ENCODE measurements at regions of chr2 and their contacts with region 1.

Region 1: DNA sequence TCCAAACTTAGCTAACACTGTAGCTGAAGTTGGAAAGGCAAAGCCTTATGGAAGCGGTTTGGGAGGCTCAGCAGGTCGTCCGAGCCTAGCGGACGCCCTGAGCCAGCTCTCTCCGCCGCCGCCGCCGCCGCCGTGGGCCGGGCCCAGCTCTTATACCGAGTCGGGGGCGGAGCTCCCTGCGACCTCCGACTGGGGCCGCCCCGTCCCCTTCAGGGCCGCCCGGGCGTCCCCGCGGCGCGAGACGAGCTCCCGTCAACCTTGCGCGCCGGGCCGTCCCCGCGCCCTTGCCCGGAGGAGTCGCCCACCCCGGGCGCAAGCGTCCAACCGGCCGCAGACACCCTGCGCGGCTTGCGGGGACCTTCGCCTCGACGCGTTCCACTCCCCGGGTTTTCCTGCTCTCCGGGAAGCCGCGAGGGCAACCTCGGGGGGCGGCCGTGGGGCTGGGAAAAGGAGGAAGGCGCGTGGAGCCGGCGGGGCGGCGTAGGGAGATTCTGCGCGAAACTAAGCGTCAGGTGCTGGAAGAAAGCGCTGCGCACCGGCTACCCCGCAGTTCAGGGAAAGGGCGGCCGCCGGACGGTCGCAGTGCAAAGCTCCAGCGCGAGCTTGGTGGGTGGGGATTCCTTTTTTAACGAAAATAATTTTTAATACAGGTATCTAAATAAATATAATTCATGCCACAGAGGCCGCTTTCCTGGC is at the start of gene SLC40A1:
- DNase-seq: peak; percentile 61
- ATAC-seq: peak; percentile 94
- H3K4me3 ChIP-seq: peak within 1 kb of the TSS; percentile 71
- H3K27ac ChIP-seq: no peak within 1 kb of the TSS
- H3K4me1 ChIP-seq: 0 out of 2 replicates have a peak, but pooled peaks cover 9% of the 10 kb centered on the region
- H3K27me3 ChIP-seq: no peaks in the 10 kb centered on the region; the same call in 1 of the 2 replicates
- CTCF ChIP-seq: no peak
- total RNA-seq, gene SLC40A1: 1.7 and 13.4 TPM in 2 replicates

Region 2: DNA sequence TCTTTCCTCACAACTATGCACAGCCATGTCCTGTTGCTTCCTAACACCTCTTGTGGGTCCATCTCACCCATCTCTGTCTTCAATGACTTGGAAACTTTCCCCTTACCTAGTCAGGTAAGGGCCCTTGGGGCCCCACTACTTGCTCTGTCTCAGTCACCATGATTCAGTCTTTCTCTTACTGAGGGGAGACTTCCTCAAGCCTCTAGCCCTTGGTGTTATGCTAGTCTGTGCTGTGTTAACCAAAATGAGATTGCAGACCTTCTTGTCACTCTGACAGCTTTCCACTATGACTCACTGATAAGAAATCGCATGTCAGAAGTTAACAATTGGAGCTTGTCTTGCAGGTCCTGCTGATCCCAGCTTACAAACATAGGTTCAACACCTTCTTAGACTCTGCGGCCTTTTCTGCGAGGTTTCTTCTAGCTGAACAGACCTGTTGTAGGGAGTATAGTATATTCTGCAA is 74.3 kb before region 1 on chr2:
- CTCF ChIA-PET with region 1: no interaction called
- POLR2A ChIA-PET with region 1: no interaction called
- intact Hi-C with region 1: no loop called
- DNase-seq: peak; percentile 5
- ATAC-seq: no peak
- H3K4me3 ChIP-seq: no peak overlapping the region
- H3K27ac ChIP-seq: no peak overlapping the region
- H3K4me1 ChIP-seq: no peaks in the 10 kb centered on the region
- H3K27me3 ChIP-seq: no peaks in the 10 kb centered on the region
- CTCF ChIP-seq: no peak

Region 3: DNA sequence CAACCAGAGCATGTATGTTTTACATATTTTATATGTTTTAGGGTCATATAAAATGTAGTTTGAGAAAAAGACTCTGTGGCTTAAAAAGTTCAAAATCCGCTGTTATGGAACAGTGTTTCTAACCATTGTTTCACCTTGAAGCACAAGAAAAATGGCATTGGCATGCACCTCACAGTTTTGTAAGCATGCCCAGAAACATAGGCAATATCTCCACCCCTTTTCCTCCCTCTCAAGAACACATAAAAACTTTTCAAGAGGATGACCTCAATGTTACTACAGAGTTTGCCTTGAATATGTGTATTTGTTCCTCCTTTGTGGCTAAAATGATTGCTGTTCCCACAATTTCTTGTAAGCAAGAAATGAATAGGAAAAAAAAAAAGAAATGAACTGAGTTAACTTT is 29.0 kb after region 1 on chr2:
- CTCF ChIA-PET with region 1: no interaction called
- POLR2A ChIA-PET with region 1: interaction called, 23 read pairs
- intact Hi-C with region 1: no loop called
- DNase-seq: peak; percentile 15
- ATAC-seq: no peak
- H3K4me3 ChIP-seq: no peak overlapping the region
- H3K27ac ChIP-seq: no peak overlapping the region
- H3K4me1 ChIP-seq: peaks cover 25% of the 10 kb centered on the region
- H3K27me3 ChIP-seq: no peaks in the 10 kb centered on the region
- CTCF ChIP-seq: no peak

Region 4: GRCh38 chr2:189648846-189649509 is 68.2 kb after region 1 on chr2:
- CTCF ChIA-PET with region 1: no interaction called
- POLR2A ChIA-PET with region 1: no interaction called
- intact Hi-C with region 1: no loop called
- DNase-seq: no peak
- ATAC-seq: no peak
- H3K4me3 ChIP-seq: no peak overlapping the region
- H3K27ac ChIP-seq: no peak overlapping the region
- H3K4me1 ChIP-seq: no peaks in the 10 kb centered on the region
- H3K27me3 ChIP-seq: no peaks in the 10 kb centered on the region
- CTCF ChIP-seq: no peak